Activated CD4-positive, alpha-beta memory T cell treated with anti-CD3 and anti-CD28 coated beads for 36 hours (primary cell): ENCODE measurements at regions of chr2 and their contacts with region 1.

Region 1: GRCh38 chr2:64330281-64331113 is 123.5 kb upstream of the LGALSL start:
- DNase-seq: peak; percentile 82
- H3K4me3 Mint-ChIP-seq: peak overlapping the region; percentile 54
- H3K27ac Mint-ChIP-seq: peak overlapping the region; percentile 46
- H3K4me1 Mint-ChIP-seq: peaks cover 41% of the 10 kb centered on the region
- H3K27me3 Mint-ChIP-seq: no peaks in the 10 kb centered on the region

Region 2: DNA sequence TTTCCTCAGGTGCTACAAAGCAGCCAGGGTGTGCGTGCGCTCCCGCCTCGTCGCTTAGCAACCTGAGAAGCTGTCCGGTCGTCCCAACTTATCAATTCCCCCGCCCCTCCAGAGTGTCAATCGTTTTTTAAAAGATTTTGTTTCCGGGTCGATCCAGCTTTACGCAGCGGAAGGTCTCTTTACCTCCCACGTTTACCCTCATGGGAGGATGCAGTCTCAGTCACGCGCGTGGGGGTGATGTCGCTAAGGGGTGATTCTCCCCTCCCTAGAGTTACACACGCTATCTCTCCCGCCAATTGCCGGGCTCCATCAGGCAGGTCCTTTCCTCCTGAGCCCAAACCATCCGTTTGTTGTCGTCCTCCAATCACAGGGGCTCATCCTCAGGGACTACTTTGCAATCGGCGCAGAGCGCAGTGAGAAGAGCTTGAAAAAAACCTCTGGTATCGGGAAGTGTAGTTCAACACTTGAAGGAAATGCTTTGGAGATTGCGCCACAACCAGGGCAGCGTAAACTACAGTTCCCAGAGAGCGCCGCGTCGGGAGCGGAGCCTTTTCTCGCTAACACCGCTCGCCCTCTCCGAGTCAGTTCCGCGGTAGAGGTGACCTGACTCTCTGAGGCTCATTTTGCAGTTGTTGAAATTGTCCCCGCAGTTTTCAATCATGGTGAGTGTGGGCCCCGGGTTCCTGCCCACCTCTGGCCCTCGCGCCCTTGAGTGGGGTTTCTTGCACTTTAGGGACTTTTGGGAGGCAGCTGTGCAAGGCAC is 741.9 kb before region 1 on chr2 and contains the starts of genes MDH1 and WDPCP:
- CTCF ChIA-PET with region 1: interaction called, 3 read pairs
- POLR2A ChIA-PET with region 1: no interaction called
- intact Hi-C with region 1: loop called (anchors 10 kb)
- DNase-seq: peak; percentile 97
- H3K4me3 Mint-ChIP-seq: peak within 1 kb of the TSS; percentile 99
- H3K27ac Mint-ChIP-seq: peak within 1 kb of the TSS; percentile 92
- H3K4me1 Mint-ChIP-seq: peaks cover 35% of the 10 kb centered on the region
- H3K27me3 Mint-ChIP-seq: no peaks in the 10 kb centered on the region
- total RNA-seq, gene MDH1: 261 to 268 TPM
- total RNA-seq, gene WDPCP: 4.4 to 5.0 TPM

Region 3: DNA sequence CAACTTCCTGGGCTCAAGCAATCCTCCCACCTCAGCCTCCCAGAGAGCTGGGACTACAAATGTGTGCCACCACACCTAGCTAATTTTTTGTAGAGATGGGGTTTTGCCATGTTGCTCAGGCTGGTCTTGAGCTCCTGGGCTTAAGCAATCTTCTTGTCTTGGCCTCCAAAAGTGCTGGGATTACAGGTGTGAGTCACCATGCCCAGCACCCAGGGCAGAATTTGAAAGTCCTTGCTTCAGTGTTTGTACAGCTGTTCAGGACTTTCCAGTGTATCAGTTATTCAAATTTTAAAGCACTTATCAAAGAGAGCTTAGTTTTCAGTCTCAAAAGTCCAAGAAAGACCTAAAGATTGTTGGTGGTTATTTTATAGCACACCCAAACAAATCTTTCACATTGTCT is 267.7 kb before region 1 on chr2:
- CTCF ChIA-PET with region 1: interaction called, 15 read pairs
- POLR2A ChIA-PET with region 1: interaction called, 6 read pairs
- intact Hi-C with region 1: no loop called
- DNase-seq: no peak
- H3K4me3 Mint-ChIP-seq: no peak overlapping the region
- H3K27ac Mint-ChIP-seq: no peak overlapping the region
- H3K4me1 Mint-ChIP-seq: peaks cover 29% of the 10 kb centered on the region
- H3K27me3 Mint-ChIP-seq: peaks cover 2% of the 10 kb centered on the region

Region 4: GRCh38 chr2:64144057-64145013 is 186.2 kb before region 1 on chr2 and contains the start of gene PELI1:
- CTCF ChIA-PET with region 1: interaction called, 14 read pairs
- POLR2A ChIA-PET with region 1: interaction called, 25 read pairs
- intact Hi-C with region 1: loop called (anchors 1 kb)
- DNase-seq: peak; percentile 97
- H3K4me3 Mint-ChIP-seq: peak within 1 kb of the TSS; percentile 96
- H3K27ac Mint-ChIP-seq: peak within 1 kb of the TSS; percentile 97
- H3K4me1 Mint-ChIP-seq: peaks cover 24% of the 10 kb centered on the region
- H3K27me3 Mint-ChIP-seq: no peaks in the 10 kb centered on the region
- total RNA-seq, gene PELI1: 38.4 to 42.9 TPM

Region 5: DNA sequence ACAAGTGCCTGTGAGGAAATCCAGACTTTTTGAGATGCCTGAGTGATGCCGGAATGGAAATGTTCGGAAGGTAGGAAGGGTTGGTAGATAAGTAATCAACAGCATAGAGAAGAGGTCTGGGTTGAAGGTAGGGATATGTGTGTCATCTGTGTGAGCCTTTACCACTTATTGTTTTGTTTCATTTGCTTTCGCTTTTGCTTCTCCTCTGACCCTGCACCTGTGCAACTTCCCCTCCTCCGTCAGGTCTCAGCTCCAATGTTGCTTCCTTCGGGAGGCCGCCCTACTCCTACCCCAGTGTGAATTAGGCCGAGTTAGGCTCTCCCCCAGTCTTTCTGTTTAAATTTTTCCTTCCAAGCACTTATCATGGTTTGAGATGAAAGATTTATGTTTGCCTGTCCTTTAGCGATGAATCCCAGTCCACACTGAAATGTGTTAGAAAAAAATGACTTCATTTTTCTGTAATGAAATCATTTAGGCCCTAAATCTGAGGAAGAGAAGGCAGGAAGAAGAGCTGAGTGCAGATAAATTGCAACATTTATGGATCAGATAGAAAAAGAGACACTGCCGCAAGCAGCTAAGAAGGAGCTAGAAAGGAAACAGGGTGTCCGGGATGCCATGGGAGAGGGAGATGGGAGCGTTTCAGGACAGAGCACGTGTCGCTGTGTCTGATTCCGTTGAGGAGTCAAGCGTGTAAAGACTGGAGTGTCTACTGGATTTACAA is 46.7 kb before region 1 on chr2:
- CTCF ChIA-PET with region 1: no interaction called
- POLR2A ChIA-PET with region 1: interaction called, 3 read pairs
- intact Hi-C with region 1: loop called (anchors 1 kb)
- DNase-seq: peak; percentile 38
- H3K4me3 Mint-ChIP-seq: no peak overlapping the region
- H3K27ac Mint-ChIP-seq: no peak overlapping the region
- H3K4me1 Mint-ChIP-seq: no peaks in the 10 kb centered on the region
- H3K27me3 Mint-ChIP-seq: no peaks in the 10 kb centered on the region

Region 6: DNA sequence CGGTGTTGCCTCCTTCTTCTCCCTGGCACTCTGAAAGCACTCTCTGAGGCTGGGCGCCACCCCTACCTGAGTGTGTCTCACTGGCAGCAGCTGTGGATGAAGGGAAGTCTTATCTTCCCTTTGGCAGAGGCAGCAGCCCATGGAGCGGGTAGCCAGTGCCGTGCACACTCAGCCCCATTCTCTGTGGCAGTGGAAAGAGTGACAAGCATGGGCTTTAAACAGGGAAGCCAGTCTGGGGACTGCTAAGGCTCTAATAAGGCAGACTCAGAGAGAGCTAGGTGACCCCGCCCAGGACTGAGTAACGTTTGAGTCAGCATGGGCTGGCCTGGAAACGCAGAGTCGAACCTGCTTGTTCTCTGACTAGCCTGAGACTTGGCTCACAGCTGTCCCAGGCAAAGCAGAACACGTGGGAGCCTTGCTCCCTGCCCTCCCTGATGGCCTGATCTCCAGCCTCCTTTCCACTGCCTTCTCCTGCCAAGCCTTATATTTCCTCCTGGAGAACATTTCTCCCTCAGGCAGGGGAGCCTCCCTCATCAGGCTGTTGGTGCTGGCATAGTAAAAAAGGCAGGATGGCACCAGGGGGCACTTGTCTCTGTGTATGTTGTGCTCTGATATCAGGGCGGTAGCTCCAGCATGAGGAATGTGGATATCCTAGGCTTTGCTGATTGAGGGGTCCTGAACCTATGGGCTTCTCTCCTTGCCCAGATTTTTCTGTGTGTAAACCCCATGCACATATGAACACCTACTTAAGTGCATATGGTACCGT is 29.6 kb after region 1 on chr2:
- CTCF ChIA-PET with region 1: interaction called, 14 read pairs
- POLR2A ChIA-PET with region 1: no interaction called
- intact Hi-C with region 1: no loop called
- DNase-seq: peak; percentile 81
- H3K4me3 Mint-ChIP-seq: no peak overlapping the region
- H3K27ac Mint-ChIP-seq: no peak overlapping the region
- H3K4me1 Mint-ChIP-seq: peaks cover 8% of the 10 kb centered on the region
- H3K27me3 Mint-ChIP-seq: peaks cover 25% of the 10 kb centered on the region

Region 7: GRCh38 chr2:64380853-64381527 is 50.5 kb after region 1 on chr2:
- CTCF ChIA-PET with region 1: no interaction called
- POLR2A ChIA-PET with region 1: no interaction called
- intact Hi-C with region 1: no loop called
- DNase-seq: no peak
- H3K4me3 Mint-ChIP-seq: no peak overlapping the region
- H3K27ac Mint-ChIP-seq: no peak overlapping the region
- H3K4me1 Mint-ChIP-seq: no peaks in the 10 kb centered on the region
- H3K27me3 Mint-ChIP-seq: peaks cover 5% of the 10 kb centered on the region

Region 8: DNA sequence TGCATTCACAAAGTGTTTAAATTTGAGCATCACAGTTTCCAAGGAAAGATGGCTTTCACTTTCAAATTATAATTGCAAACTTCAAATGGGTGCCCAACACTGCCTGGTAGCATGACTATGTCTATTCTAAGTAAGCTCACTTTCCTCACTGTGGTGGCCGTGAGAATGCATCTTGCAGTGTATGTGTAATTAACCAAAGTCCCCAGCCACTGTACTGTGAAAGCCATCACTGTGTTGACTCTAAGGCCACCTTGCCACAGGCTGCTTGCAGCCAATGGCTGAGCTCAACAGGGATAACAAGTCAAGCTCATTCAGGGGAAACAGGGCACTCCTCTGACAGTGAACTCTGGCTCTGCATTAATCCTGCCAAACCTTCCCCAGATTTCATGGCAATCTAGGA is 80.2 kb after region 1 on chr2:
- CTCF ChIA-PET with region 1: no interaction called
- POLR2A ChIA-PET with region 1: no interaction called
- intact Hi-C with region 1: no loop called
- DNase-seq: peak; percentile 11
- H3K4me3 Mint-ChIP-seq: no peak overlapping the region
- H3K27ac Mint-ChIP-seq: no peak overlapping the region
- H3K4me1 Mint-ChIP-seq: no peaks in the 10 kb centered on the region
- H3K27me3 Mint-ChIP-seq: no peaks in the 10 kb centered on the region

Region 9: GRCh38 chr2:64562148-64562784 is 231.8 kb after region 1 on chr2:
- CTCF ChIA-PET with region 1: interaction called, 62 read pairs
- POLR2A ChIA-PET with region 1: no interaction called
- intact Hi-C with region 1: loop called (anchors 2 kb)
- DNase-seq: no peak
- H3K4me3 Mint-ChIP-seq: no peak overlapping the region
- H3K27ac Mint-ChIP-seq: no peak overlapping the region
- H3K4me1 Mint-ChIP-seq: peaks cover 48% of the 10 kb centered on the region
- H3K27me3 Mint-ChIP-seq: no peaks in the 10 kb centered on the region